ENCODE measurements at regions of chr10 and their contacts with region 1.

Region 1: GRCh38 chr10:45594276-45595106 is 78.1 kb downstream of the ZFAND4 start:
- DNase-seq: peak; percentile 72 to 96 (median 92)

Region 2: GRCh38 chr10:45464958-45465567 is 129.4 kb before region 1 on chr10:
- intact Hi-C with region 1: loop called (anchors 5 kb)
- DNase-seq: peak; percentile 71 to 93 (median 86)

Region 3: DNA sequence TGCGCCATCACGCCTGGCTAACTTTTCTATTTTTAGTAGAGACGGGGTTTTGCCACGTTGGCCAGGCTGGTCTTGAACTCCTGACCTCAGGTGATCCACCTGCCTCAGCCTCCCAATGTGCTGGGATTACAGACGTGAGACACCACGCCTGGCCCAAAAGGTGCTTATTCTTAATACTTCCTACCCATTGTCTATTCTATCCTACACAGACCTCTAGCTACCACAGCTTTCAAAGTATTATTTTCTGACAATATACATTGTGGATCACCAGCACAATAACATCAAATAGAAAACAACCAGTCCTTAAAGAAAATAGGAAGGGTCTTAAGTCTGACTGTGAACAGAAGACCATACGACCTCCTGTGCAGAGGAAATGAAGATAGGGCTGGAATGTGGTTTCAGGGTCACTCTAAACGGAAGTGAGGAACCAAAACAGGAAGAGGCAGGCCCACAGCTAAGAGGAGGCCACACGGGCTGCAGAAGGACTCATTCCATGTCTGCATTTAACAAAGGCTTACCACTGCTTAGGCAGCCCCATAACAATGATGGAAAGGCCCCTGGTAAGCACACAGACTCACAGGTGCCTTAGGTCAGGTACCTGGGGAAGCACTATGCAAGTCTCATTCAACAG is 37.1 kb before region 1 on chr10:
- intact Hi-C with region 1: no loop called
- DNase-seq: no peak

Region 4: GRCh38 chr10:45672181-45673073 is 77.9 kb after region 1 on chr10 and contains the start of gene ZFAND4:
- intact Hi-C with region 1: loop called (anchors 2 kb)
- DNase-seq: peak; percentile 87 to 97 (median 95)

Measured in head of caudate nucleus (tissue), 42 donors.